ENCODE measurements at regions of chr22 and their contacts with region 1.

Region 1: DNA sequence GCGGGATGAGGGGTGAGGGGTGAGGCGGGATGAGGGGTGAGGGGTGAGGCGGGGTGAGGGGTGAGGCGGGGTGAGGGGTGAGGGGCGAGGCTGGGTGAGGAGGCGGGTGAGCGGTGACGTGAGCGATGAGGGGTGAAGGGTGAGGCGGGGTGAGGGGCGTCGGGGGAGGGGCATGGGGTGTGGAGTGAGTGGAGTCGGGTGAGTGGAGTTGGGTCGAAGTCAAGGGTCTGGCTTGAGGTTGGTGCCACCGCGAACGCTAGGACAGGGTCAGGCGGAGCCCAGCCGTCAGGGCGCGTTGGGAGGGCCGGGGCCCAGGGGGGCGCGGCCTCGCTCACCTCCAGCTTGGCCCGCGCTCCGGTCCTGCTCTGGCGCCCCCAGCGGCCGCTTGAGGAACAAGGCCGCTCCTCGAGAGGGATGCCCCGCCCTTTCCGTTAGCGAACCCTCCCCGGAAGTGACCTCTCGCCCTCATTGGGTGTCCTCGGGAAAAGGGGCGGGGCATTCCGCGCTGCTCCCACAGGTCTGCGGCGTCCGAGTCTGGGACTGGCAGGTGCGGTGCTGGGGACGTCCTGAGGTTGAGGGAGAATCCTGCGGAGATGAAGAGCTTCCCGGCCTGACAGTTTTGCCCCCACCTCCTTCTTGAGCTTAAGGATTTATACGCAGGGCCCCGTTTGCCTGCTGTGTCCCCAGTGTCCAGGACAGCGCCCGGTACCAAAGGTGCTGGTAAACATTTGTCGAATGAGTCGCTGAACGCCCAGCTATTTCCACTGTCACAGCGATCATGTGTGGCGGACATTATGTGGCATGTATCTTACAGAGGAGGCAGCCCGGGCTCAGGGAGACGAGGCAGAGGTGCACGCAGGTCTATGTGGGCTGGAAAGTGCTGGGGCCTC is at the start of gene SYCE3:
- DNase-seq: peak; percentile 93 to 98 (median 97)
- ATAC-seq: peak; percentile 98
- H3K4me3 ChIP-seq: peak within 1 kb of the TSS; percentile 57 to 67
- H3K4me3 Mint-ChIP-seq: peak within 1 kb of the TSS; percentile 94
- H3K27ac ChIP-seq: peak within 1 kb of the TSS; percentile 17 to 47
- H3K27ac Mint-ChIP-seq: peak within 1 kb of the TSS; percentile 91
- H3K4me1 ChIP-seq: peaks cover 10% of the 10 kb centered on the region
- H3K4me1 Mint-ChIP-seq: peaks cover 20% of the 10 kb centered on the region
- H3K27me3 ChIP-seq: no peaks in the 10 kb centered on the region
- H3K27me3 Mint-ChIP-seq: no peaks in the 10 kb centered on the region
- CTCF ChIP-seq: peak; percentile 91
- total RNA-seq, gene SYCE3: not detected

Region 2: DNA sequence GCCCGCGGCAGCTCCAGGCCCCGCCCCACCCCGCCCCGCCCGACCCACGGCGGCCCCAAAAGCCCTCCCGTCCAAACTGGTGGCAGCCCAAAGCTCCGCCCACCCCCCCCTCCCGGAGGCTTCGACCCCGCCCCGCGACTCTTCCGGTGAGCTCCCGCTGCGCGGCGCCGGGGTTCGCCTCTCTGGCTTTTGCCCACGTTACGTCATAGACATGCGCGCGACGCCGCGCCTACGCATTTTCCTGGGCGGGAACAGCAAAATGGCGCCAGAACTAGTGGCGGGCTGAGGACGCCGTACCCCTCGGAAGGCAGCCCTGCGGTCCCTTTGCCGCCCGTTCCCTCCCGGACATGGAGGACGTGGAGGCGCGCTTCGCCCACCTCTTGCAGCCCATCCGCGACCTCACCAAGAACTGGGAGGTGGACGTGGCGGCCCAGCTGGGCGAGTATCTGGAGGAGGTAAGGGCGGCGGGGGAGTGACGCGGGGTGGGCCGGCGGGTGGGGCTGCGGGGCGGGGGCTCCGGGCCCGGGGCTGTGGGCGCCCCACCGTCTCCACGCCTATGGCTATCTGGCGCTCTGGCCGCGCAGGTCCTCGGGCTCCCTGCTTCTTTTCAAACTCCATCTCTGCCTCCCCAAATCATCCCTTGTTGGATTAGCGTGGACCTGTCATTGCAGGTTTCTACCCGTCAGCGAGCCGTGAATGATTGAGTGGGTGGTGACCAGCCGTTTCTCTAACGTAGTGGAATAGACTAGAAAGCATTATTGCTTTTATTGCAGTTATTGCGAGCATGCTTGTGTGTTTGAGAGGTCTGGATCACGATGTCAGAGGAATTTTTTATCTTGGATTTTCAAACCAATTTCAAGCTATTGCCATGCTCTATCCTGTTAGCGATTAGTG is 54.5 kb before region 1 on chr22 and contains the start of gene NCAPH2:
- CTCF ChIA-PET with region 1: interaction called, 3 read pairs
- POLR2A ChIA-PET with region 1: interaction called, 11 read pairs
- intact Hi-C with region 1: loop called (anchors 1 to 2 kb)
- DNase-seq: peak in 8 of 9 experiments; percentile 94 to 99 (median 98)
- ATAC-seq: peak; percentile 74
- H3K4me3 ChIP-seq: peak within 1 kb of the TSS; percentile 88 to 97
- H3K4me3 Mint-ChIP-seq: peak within 1 kb of the TSS; percentile 96
- H3K27ac ChIP-seq: peak within 1 kb of the TSS; percentile 93
- H3K27ac Mint-ChIP-seq: peak within 1 kb of the TSS; percentile 99
- H3K4me1 ChIP-seq: peaks cover 23% of the 10 kb centered on the region
- H3K4me1 Mint-ChIP-seq: peaks cover 26% of the 10 kb centered on the region
- H3K27me3 ChIP-seq: no peaks in the 10 kb centered on the region
- H3K27me3 Mint-ChIP-seq: no peaks in the 10 kb centered on the region
- CTCF ChIP-seq: no peak
- total RNA-seq, gene NCAPH2: 206 to 209 TPM

Region 3: GRCh38 chr22:50537765-50538164 is 25.0 kb before region 1 on chr22:
- CTCF ChIA-PET with region 1: interaction called, 7 read pairs
- POLR2A ChIA-PET with region 1: interaction called, 11 read pairs
- intact Hi-C with region 1: no loop called
- DNase-seq: no peak
- ATAC-seq: no peak
- H3K4me3 ChIP-seq: no peak overlapping the region
- H3K4me3 Mint-ChIP-seq: peak overlapping the region; percentile 8
- H3K27ac ChIP-seq: peak overlapping the region in 1 of 2 experiments; percentile 97
- H3K27ac Mint-ChIP-seq: peak overlapping the region; percentile 35
- H3K4me1 ChIP-seq: peaks cover 17% of the 10 kb centered on the region
- H3K4me1 Mint-ChIP-seq: peaks cover 28% of the 10 kb centered on the region
- H3K27me3 ChIP-seq: no peaks in the 10 kb centered on the region
- H3K27me3 Mint-ChIP-seq: peaks cover 4% of the 10 kb centered on the region
- CTCF ChIP-seq: no peak

Region 4: GRCh38 chr22:50576070-50576469 is 13.3 kb after region 1 on chr22:
- CTCF ChIA-PET with region 1: interaction called, 25 read pairs
- POLR2A ChIA-PET with region 1: interaction called, 7 read pairs
- intact Hi-C with region 1: no loop called
- DNase-seq: no peak
- ATAC-seq: no peak
- H3K4me3 ChIP-seq: no peak overlapping the region
- H3K4me3 Mint-ChIP-seq: no peak overlapping the region
- H3K27ac ChIP-seq: no peak overlapping the region
- H3K27ac Mint-ChIP-seq: no peak overlapping the region
- H3K4me1 ChIP-seq: peaks cover 6% of the 10 kb centered on the region
- H3K4me1 Mint-ChIP-seq: peaks cover 15% of the 10 kb centered on the region
- H3K27me3 ChIP-seq: no peaks in the 10 kb centered on the region
- H3K27me3 Mint-ChIP-seq: no peaks in the 10 kb centered on the region
- CTCF ChIP-seq: no peak

Region 5: GRCh38 chr22:50599786-50600455 is 37.2 kb after region 1 on chr22:
- CTCF ChIA-PET with region 1: interaction called, 4 read pairs
- POLR2A ChIA-PET with region 1: no interaction called
- intact Hi-C with region 1: loop called in 1 of 2 experiments (anchors 2 kb)
- DNase-seq: peak; percentile 46 to 76 (median 68)
- ATAC-seq: peak; percentile 99
- H3K4me3 ChIP-seq: no peak overlapping the region
- H3K4me3 Mint-ChIP-seq: peak overlapping the region; percentile 56
- H3K27ac ChIP-seq: no peak overlapping the region
- H3K27ac Mint-ChIP-seq: no peak overlapping the region
- H3K4me1 ChIP-seq: no peaks in the 10 kb centered on the region
- H3K4me1 Mint-ChIP-seq: peaks cover 13% of the 10 kb centered on the region
- H3K27me3 ChIP-seq: peaks cover 13 to 32% of the 10 kb centered on the region in 2 experiments
- H3K27me3 Mint-ChIP-seq: peaks cover 31% of the 10 kb centered on the region
- CTCF ChIP-seq: no peak

Region 6: DNA sequence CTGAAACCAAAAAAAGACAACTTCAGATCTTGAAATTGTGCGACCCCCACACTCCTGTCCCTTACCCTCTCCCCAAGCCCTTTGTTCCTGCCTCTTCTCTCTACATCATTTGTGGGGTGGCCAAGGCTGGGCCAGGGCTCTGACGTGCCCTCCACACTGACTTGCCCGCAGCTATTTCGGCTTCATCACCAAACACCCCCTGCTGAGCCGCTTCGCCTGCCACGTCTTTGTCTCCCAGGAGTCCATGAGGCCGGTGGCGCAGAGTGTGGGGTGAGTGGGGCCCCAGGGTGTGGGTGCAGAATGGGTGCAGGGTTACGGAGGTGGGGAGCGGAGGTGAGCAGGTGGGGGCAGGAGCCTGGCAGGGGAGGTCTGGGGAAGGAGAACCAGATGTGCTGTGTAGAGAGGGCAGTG is 47.3 kb after region 1 on chr22:
- CTCF ChIA-PET with region 1: no interaction called
- POLR2A ChIA-PET with region 1: no interaction called
- intact Hi-C with region 1: no loop called
- DNase-seq: no peak
- ATAC-seq: no peak
- H3K4me3 ChIP-seq: no peak overlapping the region
- H3K4me3 Mint-ChIP-seq: no peak overlapping the region
- H3K27ac ChIP-seq: no peak overlapping the region
- H3K27ac Mint-ChIP-seq: no peak overlapping the region
- H3K4me1 ChIP-seq: no peaks in the 10 kb centered on the region
- H3K4me1 Mint-ChIP-seq: peaks cover 4% of the 10 kb centered on the region
- H3K27me3 ChIP-seq: peaks cover 0 to 2% of the 10 kb centered on the region in 2 experiments
- H3K27me3 Mint-ChIP-seq: peaks cover 28% of the 10 kb centered on the region
- CTCF ChIP-seq: no peak

Measured in CD8-positive, alpha-beta T cell (primary cell).